Left cardiac atrium (tissue), 4 donors: ENCODE measurements at regions of chr22 and their contacts with region 1.

Region 1: GRCh38 chr22:36447632-36448031 is 33.8 kb downstream of the TXN2 start:
- DNase-seq: no peak
- ATAC-seq: no peak

Region 2: DNA sequence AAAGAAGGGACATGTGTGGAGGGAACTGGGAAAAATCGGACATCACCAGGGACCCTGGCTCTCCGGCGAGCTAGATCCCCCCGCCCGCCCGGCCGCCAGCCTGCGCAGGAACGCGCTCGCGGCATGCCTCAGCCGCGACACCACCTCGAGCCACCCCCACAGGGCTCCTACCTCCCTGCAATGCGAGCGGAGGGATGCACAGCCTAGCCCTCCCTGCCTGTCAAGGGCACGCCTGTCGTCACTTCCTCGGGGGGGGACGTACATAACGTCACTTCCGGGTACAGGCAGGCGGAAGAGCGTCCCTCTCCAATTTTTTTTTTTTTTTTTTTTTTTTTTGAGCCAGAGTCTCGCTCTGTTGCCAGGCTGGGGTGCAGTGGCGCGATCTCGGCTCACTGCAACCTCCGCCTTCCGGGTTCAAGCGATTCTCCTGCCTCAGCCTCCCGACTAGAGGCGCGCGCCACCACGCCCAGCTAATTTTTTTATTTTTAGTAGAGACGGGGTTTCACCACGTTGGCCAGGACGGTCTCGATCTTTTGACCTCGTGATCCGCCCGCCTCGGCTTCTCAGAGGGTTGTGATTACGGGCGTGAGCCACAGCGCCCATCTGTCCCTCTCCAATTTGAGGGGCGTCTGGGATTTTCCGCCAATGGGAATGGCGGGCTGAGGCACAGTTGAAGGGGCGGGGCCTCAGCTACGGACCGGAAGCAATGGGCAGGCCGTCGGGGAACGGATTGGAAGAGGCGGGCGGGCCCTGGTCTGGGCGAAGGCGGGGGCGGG is 33.9 kb after region 1 on chr22 and contains the start of gene TXN2:
- intact Hi-C with region 1: loop called in 1 of 2 experiments (anchors 2 kb)
- DNase-seq: peak; percentile 98
- ATAC-seq: peak; percentile 95 to 97
- total RNA-seq, gene TXN2: 91.5 to 96.8 TPM